ENCODE measurements at regions of chr14 and their contacts with region 1.

Region 1: DNA sequence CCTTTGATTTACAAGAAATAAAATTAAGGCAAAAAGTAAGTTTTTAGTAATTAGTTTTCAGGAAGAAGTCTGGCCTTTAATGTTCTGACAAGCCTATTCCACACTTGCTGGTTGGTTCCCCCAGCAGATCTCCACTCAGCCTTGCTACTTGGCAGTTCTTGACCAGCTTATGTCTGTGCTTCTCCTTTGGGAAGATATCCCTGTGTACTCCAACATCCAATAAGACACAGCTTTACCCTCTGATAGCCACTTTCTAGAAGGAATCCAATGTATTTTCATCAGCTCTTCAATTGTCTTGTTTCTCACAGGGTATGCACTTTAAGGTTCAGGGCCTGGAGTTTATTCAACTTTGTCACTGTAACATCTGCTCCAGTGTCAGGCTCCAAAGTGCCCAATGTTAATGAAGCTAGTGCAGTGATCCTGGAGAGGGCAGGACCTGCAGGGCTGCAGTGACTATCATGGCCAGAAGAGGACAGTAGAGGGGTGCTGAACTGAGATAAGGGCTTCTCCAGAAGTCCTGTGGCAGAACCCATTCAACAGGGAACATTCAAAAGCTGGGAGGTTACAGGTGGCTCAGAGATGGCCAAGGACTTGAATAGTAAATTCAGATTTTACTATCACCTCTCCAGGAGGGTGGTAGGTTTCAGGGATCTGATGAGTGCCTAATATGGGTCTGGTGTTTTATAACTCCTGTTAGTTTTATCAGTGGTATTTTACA is 22.9 kb downstream of the JKAMP start:
- DNase-seq: peak; percentile 89
- H3K4me3 ChIP-seq: no peak overlapping the region
- H3K27ac ChIP-seq: no peak overlapping the region
- H3K4me1 ChIP-seq: no peaks in the 10 kb centered on the region
- H3K27me3 ChIP-seq: no peaks in the 10 kb centered on the region
- CTCF ChIP-seq: peak; percentile 94

Region 2: DNA sequence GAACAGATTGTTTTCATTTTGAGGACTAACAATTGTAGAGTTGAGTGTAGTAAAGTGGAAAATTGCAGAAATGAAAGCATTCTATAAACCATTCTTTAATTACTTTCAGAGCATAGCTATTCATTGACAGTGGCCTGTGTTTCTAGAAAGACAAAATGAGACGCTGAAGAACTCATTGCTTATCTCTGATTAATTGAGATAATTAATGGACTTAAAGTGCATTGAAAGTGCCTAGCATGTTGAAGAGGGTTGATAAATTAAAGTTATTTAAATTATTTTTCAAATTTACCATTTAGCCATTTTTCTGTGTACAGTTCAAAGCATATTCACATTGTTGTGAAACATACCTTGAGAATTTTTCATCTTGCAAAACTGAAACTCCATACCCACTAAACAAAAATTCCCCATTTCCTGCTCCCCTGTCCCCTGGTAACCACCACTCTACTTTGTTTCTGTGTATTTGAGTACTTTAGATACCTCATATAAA is 261.4 kb before region 1 on chr14:
- intact Hi-C with region 1: no loop called
- DNase-seq: no peak
- H3K4me3 ChIP-seq: no peak overlapping the region
- H3K27ac ChIP-seq: no peak overlapping the region
- H3K4me1 ChIP-seq: no peaks in the 10 kb centered on the region
- H3K27me3 ChIP-seq: no peaks in the 10 kb centered on the region
- CTCF ChIP-seq: no peak

Region 3: GRCh38 chr14:59333668-59334067 is 173.6 kb before region 1 on chr14:
- intact Hi-C with region 1: no loop called
- DNase-seq: no peak
- H3K4me3 ChIP-seq: no peak overlapping the region
- H3K27ac ChIP-seq: peak overlapping the region; percentile 41
- H3K4me1 ChIP-seq: no peaks in the 10 kb centered on the region
- H3K27me3 ChIP-seq: no peaks in the 10 kb centered on the region
- CTCF ChIP-seq: no peak

Region 4: DNA sequence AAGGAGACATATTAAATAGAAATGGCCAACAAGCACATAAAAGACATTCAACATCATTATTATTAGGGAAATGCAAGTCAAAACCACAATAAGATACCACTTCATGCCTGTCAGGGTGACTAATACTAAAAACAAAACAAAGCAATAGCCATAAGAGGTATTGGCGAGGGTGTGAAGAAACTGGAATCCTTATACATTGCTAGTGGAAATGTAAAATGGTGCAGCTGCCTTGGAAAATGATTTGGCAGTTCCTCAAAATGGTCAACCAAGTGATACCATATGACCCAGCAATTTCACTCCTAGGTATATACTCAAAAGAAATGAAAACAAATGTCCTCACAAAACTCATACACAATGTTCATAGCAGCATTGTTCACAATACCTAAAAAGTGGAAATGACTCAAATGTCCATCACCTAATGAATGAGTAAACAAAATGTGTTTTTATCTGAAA is 69.0 kb before region 1 on chr14:
- intact Hi-C with region 1: no loop called
- DNase-seq: no peak
- H3K4me3 ChIP-seq: no peak overlapping the region
- H3K27ac ChIP-seq: no peak overlapping the region
- H3K4me1 ChIP-seq: no peaks in the 10 kb centered on the region
- H3K27me3 ChIP-seq: no peaks in the 10 kb centered on the region
- CTCF ChIP-seq: no peak

Region 5: DNA sequence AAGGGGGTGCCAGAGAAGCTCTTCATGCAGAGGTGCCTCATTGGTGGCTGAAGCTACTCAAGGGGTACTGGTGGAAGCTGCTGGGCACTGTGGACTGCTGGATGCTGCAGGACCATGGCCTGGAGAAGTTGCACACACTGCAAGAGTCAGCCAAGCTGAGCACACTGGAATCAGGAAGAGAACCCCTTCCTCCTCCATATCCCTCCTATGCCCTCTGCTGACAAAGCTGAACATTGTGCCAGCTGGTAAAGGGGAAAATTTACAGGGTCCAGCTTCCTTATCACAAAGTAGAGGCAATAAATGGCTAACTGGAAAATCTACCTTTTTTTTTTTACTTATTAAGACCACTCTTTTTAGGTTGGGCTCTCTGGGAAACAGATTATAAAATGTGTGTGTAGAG is 62.9 kb after region 1 on chr14:
- intact Hi-C with region 1: loop called (anchors 5 kb)
- DNase-seq: peak; percentile 41
- H3K4me3 ChIP-seq: no peak overlapping the region
- H3K27ac ChIP-seq: no peak overlapping the region
- H3K4me1 ChIP-seq: no peaks in the 10 kb centered on the region
- H3K27me3 ChIP-seq: no peaks in the 10 kb centered on the region
- CTCF ChIP-seq: peak; percentile 29

Region 6: GRCh38 chr14:60125918-60126317 is 618.7 kb after region 1 on chr14:
- intact Hi-C with region 1: no loop called
- DNase-seq: no peak
- H3K4me3 ChIP-seq: no peak overlapping the region
- H3K27ac ChIP-seq: no peak overlapping the region
- H3K4me1 ChIP-seq: no peaks in the 10 kb centered on the region
- H3K27me3 ChIP-seq: no peaks in the 10 kb centered on the region
- CTCF ChIP-seq: no peak

Measured in colonic mucosa (tissue), 4 donors.